Lower lobe of right lung (tissue), 2 donors: ENCODE measurements at regions of chr20 and their contacts with region 1.

Region 1: GRCh38 chr20:50460460-50461267 is 49.5 kb upstream of the PTPN1 start:
- DNase-seq: peak; percentile 93
- ATAC-seq: peak; percentile 92 to 96
- H3K4me3 ChIP-seq: no peak overlapping the region
- H3K27ac ChIP-seq: peak overlapping the region; percentile 56
- H3K4me1 ChIP-seq: peaks cover 35% of the 10 kb centered on the region
- H3K27me3 ChIP-seq: no peaks in the 10 kb centered on the region
- CTCF ChIP-seq: peak; percentile 93

Region 2: DNA sequence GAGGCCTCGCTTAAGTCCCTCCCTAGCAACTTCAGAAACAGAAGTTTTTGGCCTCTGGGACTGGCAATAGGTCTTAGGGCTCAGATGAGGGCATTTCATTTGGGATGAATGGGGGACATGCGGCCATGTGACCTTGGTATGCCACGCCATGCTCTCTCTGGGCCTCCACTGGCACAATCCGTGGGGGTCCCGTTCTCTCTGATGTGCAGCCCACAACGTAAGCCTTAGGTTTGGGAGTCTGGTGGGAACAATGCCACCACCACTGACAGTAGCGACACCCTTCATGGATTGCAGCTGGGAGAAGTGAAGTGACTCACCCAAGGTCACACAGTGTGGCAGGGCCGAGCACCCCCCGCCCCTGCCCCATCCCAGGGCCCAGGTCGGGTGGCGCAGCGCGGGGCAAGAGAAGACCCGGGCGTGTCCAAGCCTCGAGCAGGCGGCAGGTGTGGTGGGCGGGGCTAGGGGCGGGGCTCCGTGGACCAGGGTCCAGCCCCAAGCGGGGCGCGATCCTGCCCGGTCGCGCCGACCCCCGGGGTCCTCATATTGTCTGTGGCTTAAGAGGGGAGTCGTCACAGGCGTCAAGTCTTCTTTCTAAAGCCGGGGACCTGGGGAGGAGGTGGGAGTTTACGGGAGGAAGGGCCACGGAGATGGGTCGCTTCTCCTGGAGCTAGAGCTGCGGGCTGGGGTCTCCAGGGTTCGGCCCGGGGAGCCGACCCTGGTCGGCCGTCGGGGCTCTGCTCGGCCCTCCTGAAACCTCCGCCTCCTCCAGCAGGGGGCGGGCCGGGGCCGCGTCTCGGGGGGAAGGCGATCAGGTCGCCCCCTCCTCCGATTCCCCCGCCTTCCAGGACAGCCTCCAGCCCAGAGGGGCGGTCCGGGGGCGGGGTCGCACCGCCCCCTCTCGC is 270.7 kb before region 1 on chr20:
- intact Hi-C with region 1: loop called (anchors 5 kb)
- DNase-seq: peak; percentile 92
- ATAC-seq: peak; percentile 73 to 88
- H3K4me3 ChIP-seq: peak overlapping the region; percentile 90
- H3K27ac ChIP-seq: peak overlapping the region; percentile 100
- H3K4me1 ChIP-seq: peaks cover 40% of the 10 kb centered on the region
- H3K27me3 ChIP-seq: no peaks in the 10 kb centered on the region
- CTCF ChIP-seq: peak; percentile 63